ENCODE measurements at regions of chr10 and their contacts with region 1.

Region 1: GRCh38 chr10:119103903-119104652 is at the start of gene DENND10:
- DNase-seq: peak; percentile 83
- H3K4me3 ChIP-seq: peak within 1 kb of the TSS; percentile 83
- H3K27ac ChIP-seq: no peak within 1 kb of the TSS
- H3K4me1 ChIP-seq: peaks cover 17% of the 10 kb centered on the region
- CTCF ChIP-seq: no peak
- total RNA-seq, gene DENND10: 17.8 and 18.0 TPM in 2 replicates

Region 2: GRCh38 chr10:118017850-118018249 is 1086.2 kb before region 1 on chr10:
- CTCF ChIA-PET with region 1: no interaction called
- POLR2A ChIA-PET with region 1: no interaction called
- intact Hi-C with region 1: no loop called
- DNase-seq: no peak
- H3K4me3 ChIP-seq: no peak overlapping the region
- H3K27ac ChIP-seq: no peak overlapping the region
- H3K4me1 ChIP-seq: peaks cover 4% of the 10 kb centered on the region
- CTCF ChIP-seq: no peak

Region 3: DNA sequence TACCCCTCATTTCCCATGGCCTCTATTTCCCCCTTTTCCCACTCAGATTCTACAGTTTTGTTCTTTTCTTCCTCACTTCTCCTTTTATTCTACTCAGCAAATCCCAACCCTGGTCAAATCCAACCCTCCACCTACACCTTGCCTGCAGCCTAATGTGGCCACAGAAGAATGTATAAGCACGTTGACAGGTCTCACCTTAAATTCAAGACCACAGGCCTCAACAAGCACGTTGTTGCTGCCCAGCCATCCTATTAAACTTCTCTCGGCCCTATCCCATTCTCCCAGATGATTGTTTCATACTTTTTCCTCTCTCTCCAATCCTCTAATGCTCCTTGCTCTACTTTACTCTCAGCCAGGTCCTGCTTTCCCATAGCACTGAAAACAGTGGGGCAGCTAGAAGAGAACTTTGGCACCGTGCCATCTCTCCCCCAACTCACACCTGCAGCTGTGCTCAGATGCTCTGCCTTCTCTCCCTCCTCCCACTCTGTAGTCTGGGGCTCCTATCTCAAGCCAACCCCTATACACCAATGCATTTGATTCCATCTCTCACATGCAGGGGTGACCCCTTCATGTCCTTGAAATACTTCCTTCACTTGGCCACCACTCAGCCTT is 16.7 kb before region 1 on chr10:
- CTCF ChIA-PET with region 1: interaction called, 4 read pairs
- POLR2A ChIA-PET with region 1: interaction called, 6 read pairs
- intact Hi-C with region 1: loop called (anchors 2 kb)
- DNase-seq: peak; percentile 84
- H3K4me3 ChIP-seq: peak overlapping the region; percentile 4
- H3K27ac ChIP-seq: peak overlapping the region; percentile 67
- H3K4me1 ChIP-seq: peaks cover 39% of the 10 kb centered on the region
- CTCF ChIP-seq: no peak

Region 4: GRCh38 chr10:119165171-119166110 is 61.4 kb after region 1 on chr10 and contains the start of gene SFXN4:
- CTCF ChIA-PET with region 1: no interaction called
- POLR2A ChIA-PET with region 1: interaction called, 5 read pairs
- intact Hi-C with region 1: loop called (anchors 1 kb)
- DNase-seq: peak; percentile 80
- H3K4me3 ChIP-seq: peak within 1 kb of the TSS; percentile 82
- H3K27ac ChIP-seq: peak within 1 kb of the TSS; percentile 57
- H3K4me1 ChIP-seq: peaks cover 26% of the 10 kb centered on the region
- CTCF ChIP-seq: 0 out of 2 replicates have a peak, but pooled peaks have one; percentile 8
- total RNA-seq, gene SFXN4: 27.8 and 35.9 TPM in 2 replicates

Measured in OCI-LY7 (cell line).